ENCODE measurements at regions of chr5 and their contacts with region 1.

Region 1: GRCh38 chr5:134004592-134005375 is at the start of gene VDAC1:
- DNase-seq: peak; percentile 67 to 78
- ATAC-seq: peak; percentile 66 to 76
- H3K4me3 ChIP-seq: peak within 1 kb of the TSS; percentile 72 to 96 (median 84)
- H3K27ac ChIP-seq: peak within 1 kb of the TSS; percentile 91 to 100 (median 98)
- H3K4me1 ChIP-seq: peaks cover 46 to 51% of the 10 kb centered on the region in 2 donors
- H3K27me3 ChIP-seq: no peaks in the 10 kb centered on the region
- CTCF ChIP-seq: no peak
- POLR2A ChIP-seq: peak; percentile 85
- total RNA-seq, gene VDAC1: 412 to 611 (median 495) TPM

Region 2: GRCh38 chr5:132369474-132370180 is 1635.2 kb before region 1 on chr5 and contains the start of gene SLC22A5:
- in situ Hi-C with region 1: no loop called
- intact Hi-C with region 1: loop called (anchors 10 kb)
- DNase-seq: peak; percentile 61 to 80
- ATAC-seq: peak; percentile 73 to 75
- H3K4me3 ChIP-seq: peak within 1 kb of the TSS; percentile 64 to 82 (median 78)
- H3K27ac ChIP-seq: peak within 1 kb of the TSS; percentile 92 to 99 (median 96)
- H3K4me1 ChIP-seq: peaks cover 33 to 36% of the 10 kb centered on the region in 2 donors
- H3K27me3 ChIP-seq: no peaks in the 10 kb centered on the region
- CTCF ChIP-seq: peak in 1 of 5 experiments; percentile 18
- POLR2A ChIP-seq: peak; percentile 93 to 95
- total RNA-seq, gene SLC22A5: 56.2 to 116 (median 79.2) TPM

Region 3: DNA sequence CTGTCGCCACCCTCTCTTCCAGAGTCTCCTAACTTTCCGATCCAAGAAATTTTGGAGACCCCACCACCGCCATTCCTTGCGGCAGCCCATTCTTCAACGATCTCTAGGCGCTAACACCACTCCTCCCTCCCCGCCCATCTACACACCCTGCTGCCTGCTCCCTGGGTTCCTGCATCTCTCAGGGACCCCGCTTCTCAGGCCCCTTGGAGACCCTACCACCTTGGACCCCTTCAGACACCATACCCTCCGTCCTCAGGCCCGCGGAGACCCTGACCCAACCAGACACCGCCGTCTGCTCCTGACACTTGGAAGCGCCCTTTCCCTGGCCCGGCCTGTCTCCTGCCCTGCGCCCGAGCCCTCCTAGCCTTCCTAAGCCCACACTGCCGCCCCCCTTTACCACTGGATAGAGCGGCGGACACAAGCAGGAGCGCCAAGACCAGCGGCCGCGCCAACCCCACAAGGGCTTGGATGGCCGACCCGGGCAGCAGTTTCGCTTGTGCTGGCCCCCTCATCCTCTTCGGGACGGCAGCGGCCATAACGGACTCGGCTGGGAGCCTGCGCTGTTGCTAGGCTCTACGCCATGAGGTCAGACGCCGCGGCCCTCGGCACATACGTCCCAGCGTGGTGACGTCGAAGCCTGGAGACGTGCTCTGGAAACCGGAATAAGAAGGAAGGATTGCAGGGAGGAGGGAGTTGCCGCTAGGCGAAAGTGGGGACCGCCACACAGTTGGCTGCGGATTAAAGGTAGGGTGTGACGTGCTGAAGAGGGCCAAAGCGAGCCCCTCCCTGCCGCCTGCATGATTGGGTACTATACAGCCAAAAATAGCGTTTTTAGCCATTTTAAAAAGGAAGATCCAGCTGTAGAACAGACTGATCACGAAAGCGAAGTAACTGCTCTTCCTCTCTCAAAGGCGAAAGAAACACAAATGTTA is 36.5 kb before region 1 on chr5 and contains the start of gene C5orf15:
- in situ Hi-C with region 1: no loop called
- intact Hi-C with region 1: loop called (anchors 2 kb)
- DNase-seq: peak; percentile 94 to 95
- ATAC-seq: peak; percentile 97 to 98
- H3K4me3 ChIP-seq: peak within 1 kb of the TSS; percentile 71 to 93 (median 89)
- H3K27ac ChIP-seq: peak within 1 kb of the TSS; percentile 91 to 97 (median 94)
- H3K4me1 ChIP-seq: peaks cover 18 to 25% of the 10 kb centered on the region in 2 donors
- H3K27me3 ChIP-seq: no peaks in the 10 kb centered on the region
- CTCF ChIP-seq: peak in 3 of 5 experiments; percentile 24 to 47 (median 42)
- POLR2A ChIP-seq: peak; percentile 79 to 92
- total RNA-seq, gene C5orf15: 18.7 to 30.3 (median 24.4) TPM

Region 4: DNA sequence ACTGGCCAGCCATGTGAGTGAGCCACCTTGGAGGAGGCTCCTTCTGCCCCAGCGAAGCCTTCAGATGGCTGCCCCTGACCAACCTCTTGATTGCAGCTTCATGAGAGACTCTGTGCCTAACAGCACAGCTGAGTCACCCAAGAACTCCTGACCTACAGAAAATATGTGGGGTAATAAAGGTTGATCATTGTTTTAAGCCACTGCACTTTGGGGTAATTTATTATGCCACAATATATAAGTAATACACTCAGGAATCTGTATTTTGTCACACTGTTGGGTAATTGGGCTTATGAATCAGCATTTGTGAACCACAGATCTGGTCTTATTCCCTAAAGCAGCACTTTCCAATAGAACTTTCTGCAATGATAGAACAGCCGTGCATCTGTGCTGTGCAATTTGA is 24.4 kb after region 1 on chr5:
- in situ Hi-C with region 1: no loop called
- intact Hi-C with region 1: no loop called
- DNase-seq: no peak
- ATAC-seq: no peak
- H3K4me3 ChIP-seq: no peak overlapping the region
- H3K27ac ChIP-seq: no peak overlapping the region
- H3K4me1 ChIP-seq: no peaks in the 10 kb centered on the region
- H3K27me3 ChIP-seq: no peaks in the 10 kb centered on the region
- CTCF ChIP-seq: no peak
- POLR2A ChIP-seq: no peak

Region 5: GRCh38 chr5:134070725-134071613 is 66.2 kb after region 1 on chr5:
- in situ Hi-C with region 1: no loop called
- intact Hi-C with region 1: no loop called
- DNase-seq: no peak
- ATAC-seq: no peak
- H3K4me3 ChIP-seq: peak overlapping the region; percentile 30 to 50 (median 38)
- H3K27ac ChIP-seq: no peak overlapping the region
- H3K4me1 ChIP-seq: peaks cover 5 to 7% of the 10 kb centered on the region in 2 donors
- H3K27me3 ChIP-seq: peaks cover 0 to 13% (median 4%) of the 10 kb centered on the region in 3 donors
- CTCF ChIP-seq: no peak
- POLR2A ChIP-seq: no peak

Region 6: DNA sequence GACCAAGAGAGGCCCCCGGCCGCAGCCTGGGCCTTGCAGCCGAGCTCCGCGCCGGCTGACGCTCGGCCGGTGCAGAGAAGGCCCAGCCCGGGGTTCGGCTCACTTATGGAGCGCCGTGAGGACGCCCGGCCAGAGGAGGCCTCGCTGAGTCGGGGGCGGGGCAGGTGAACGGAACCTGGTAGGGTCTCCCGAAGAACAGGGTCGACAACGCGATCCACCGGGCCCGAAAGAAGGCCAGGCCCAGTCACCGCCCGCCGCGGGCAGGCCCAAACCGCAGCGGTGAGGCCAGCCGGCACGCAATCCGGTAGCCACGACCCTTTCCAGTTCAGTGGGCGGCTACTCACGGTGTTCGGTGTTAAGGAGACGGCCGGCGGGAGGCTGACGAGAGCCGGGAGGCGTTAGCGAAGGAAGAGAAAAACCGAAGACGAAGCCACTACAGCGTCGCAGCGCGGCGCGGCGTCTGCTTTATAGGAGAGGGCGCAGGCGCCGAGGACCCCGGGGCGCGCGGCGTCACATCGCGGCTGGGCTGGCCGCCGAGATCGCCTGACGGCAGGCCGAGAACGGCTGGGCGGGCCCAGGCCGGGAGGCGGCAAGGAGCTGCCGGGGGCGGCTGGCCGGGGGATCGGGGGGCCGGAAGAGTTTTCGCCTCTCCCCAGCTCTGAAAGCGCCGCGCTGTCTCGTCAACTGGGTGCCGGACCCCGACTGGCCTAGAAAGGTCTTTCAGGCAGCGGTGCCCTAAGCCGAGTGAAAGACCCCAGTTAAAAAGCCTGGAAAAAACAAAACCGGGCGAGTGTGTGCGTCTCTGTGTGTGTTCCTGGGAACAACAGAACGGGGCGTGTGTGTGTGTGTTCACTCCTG is 172.0 kb after region 1 on chr5 and contains the start of gene SKP1:
- in situ Hi-C with region 1: no loop called
- intact Hi-C with region 1: no loop called
- DNase-seq: peak; percentile 68 to 77
- ATAC-seq: peak; percentile 72 to 76
- H3K4me3 ChIP-seq: peak within 1 kb of the TSS; percentile 96 to 99 (median 98)
- H3K27ac ChIP-seq: peak within 1 kb of the TSS; percentile 93 to 99 (median 96)
- H3K4me1 ChIP-seq: peaks cover 45 to 46% of the 10 kb centered on the region in 2 donors
- H3K27me3 ChIP-seq: no peaks in the 10 kb centered on the region
- CTCF ChIP-seq: no peak
- POLR2A ChIP-seq: peak; percentile 96 to 97
- total RNA-seq, gene SKP1: 318 to 499 (median 476) TPM

Region 7: DNA sequence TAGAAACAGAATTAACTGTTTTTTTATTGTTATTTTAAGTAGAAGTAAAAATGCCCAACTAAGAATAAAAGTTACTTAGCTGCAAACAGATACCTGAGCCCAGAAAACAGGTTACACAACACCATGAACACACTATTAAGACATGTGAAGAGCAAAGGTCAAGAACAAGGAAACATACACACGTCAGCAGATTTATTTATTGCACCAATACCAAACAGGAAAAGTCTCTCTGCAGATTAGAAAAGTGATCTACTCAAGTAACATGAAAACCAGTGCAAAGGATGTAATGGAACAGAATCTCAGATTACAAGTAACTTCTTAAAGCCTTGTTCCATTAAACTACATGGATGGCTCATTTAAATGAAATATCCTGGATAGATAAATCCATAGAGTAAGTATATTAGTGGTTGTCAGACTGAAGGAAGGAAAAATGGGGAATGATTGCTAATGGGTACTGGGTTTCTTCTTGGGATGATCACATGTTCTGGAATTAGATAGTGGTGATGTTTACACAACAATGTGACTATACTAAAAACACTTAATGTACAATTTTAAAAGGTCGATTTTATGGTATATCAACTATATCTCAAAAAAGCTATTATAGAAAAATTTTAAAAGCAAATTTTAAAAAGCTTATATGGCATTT is 621.7 kb after region 1 on chr5:
- in situ Hi-C with region 1: no loop called
- intact Hi-C with region 1: loop called (anchors 10 kb)
- DNase-seq: peak in 1 of 2 donors; percentile 20
- ATAC-seq: peak; percentile 94 to 95
- H3K4me3 ChIP-seq: no peak overlapping the region
- H3K27ac ChIP-seq: peak overlapping the region; percentile 94 to 97 (median 96)
- H3K4me1 ChIP-seq: peaks cover 39 to 46% of the 10 kb centered on the region in 2 donors
- H3K27me3 ChIP-seq: no peaks in the 10 kb centered on the region
- CTCF ChIP-seq: no peak
- POLR2A ChIP-seq: no peak

Region 8: DNA sequence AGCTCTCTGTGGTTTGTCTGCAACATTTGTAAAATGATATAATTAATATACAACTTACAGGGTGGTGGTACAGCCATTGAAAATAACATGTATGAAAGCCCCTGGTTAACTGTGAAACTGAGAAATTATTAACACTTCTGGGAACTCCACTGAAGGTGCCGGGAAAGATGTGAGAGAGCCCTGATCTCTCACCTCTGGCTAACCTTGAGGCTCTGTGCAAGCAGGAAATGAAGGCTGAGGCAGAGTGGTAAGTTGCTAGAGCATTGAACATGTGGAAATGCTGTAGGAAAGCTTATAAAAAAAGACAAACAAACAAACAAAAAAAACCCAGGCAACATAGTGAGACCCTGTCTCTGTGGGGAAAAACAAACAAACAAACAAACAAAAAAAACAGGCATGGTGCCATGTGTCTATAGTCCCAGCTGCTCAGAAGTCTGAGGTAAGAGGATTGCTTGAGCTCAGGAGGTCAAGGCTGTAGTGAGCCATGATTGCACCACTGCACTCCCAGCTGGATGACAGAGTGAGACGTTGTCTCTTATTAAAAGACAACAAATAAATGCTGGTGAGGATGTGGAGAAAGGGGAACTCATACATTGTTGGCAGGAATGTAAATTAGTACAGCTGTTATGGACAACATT is 970.4 kb after region 1 on chr5:
- in situ Hi-C with region 1: no loop called
- intact Hi-C with region 1: no loop called
- DNase-seq: no peak
- ATAC-seq: no peak
- H3K4me3 ChIP-seq: no peak overlapping the region
- H3K27ac ChIP-seq: no peak overlapping the region
- H3K4me1 ChIP-seq: no peaks in the 10 kb centered on the region
- H3K27me3 ChIP-seq: no peaks in the 10 kb centered on the region
- CTCF ChIP-seq: no peak
- POLR2A ChIP-seq: no peak

Measured in gastrocnemius medialis (tissue), 4 donors.